AG04450 (cell line): ENCODE measurements at regions of chr1 and their contacts with region 1.

Region 1: GRCh38 chr1:39973503-39974135 is 18.7 kb downstream of the MFSD2A start:
- DNase-seq: no peak
- H3K4me3 ChIP-seq: no peak overlapping the region
- H3K27ac ChIP-seq: no peak overlapping the region
- H3K27me3 ChIP-seq: no peaks in the 10 kb centered on the region
- CTCF ChIP-seq: peak; percentile 98

Region 2: GRCh38 chr1:39816415-39817090 is 157.1 kb before region 1 on chr1:
- CTCF ChIA-PET with region 1: interaction called, 37 read pairs
- POLR2A ChIA-PET with region 1: no interaction called
- DNase-seq: peak; percentile 23
- H3K4me3 ChIP-seq: no peak overlapping the region
- H3K27ac ChIP-seq: no peak overlapping the region
- H3K27me3 ChIP-seq: peaks cover 12% of the 10 kb centered on the region
- CTCF ChIP-seq: peak; percentile 82

Region 3: GRCh38 chr1:39845275-39846116 is 128.1 kb before region 1 on chr1:
- CTCF ChIA-PET with region 1: interaction called, 14 read pairs
- POLR2A ChIA-PET with region 1: no interaction called
- DNase-seq: peak; percentile 75
- H3K4me3 ChIP-seq: peak overlapping the region; percentile 31
- H3K27ac ChIP-seq: peak overlapping the region; percentile 87
- H3K27me3 ChIP-seq: no peaks in the 10 kb centered on the region
- CTCF ChIP-seq: no peak

Region 4: DNA sequence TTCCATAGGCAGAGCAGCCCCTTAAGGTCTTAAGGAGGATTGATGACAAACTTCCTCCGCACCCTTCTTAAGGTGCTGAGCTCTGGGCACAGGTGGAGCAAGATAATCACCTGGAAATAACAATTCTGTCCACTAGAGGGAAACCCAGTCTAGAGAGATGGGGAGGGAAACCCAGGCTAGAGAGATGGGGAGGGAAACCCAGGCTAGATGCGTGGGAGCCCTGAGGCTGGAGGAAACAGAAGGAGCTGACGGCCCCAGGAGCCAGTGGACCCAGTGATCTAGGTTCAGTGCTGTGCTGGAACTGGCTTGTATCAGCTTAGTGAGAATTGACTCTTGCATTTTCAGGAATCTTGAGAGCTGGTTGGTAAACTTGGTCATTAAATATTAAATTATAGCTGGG is 54.1 kb before region 1 on chr1:
- CTCF ChIA-PET with region 1: interaction called, 102 read pairs
- POLR2A ChIA-PET with region 1: no interaction called
- DNase-seq: peak; percentile 21
- H3K4me3 ChIP-seq: no peak overlapping the region
- H3K27ac ChIP-seq: no peak overlapping the region
- H3K27me3 ChIP-seq: peaks cover 12% of the 10 kb centered on the region
- CTCF ChIP-seq: peak; percentile 71

Region 5: DNA sequence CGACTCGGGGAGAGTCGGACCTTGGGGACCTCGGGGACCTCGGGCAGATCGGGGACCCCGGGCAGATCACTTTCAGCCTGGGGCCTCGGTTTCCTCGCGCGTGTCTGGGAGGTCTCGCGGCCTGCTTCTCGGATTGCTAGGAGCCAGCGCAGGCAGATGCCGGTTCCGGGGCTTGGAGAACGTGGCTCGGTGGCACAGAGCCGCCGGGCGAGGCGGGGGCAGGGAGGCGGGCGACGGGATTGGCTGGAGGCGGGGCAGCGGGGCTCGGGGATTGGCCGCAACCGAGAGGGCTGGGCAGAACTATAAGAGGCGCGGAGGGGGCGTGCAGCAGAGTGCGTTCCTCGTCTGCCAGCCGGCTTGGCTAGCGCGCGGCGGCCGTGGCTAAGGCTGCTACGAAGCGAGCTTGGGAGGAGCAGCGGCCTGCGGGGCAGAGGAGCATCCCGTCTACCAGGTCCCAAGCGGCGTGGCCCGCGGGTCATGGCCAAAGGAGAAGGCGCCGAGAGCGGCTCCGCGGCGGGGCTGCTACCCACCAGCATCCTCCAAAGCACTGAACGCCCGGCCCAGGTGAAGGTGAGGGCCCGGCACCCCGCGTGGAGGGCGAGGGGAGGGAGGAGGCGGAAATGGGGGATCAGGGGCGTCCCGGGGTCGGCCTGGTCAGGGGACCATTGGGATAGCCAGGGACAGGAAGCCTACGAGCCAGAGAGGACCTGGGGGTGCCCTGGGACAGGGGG is 18.6 kb before region 1 on chr1 and contains the start of gene MFSD2A:
- CTCF ChIA-PET with region 1: interaction called, 12 read pairs
- POLR2A ChIA-PET with region 1: no interaction called
- DNase-seq: peak; percentile 75
- H3K4me3 ChIP-seq: peak within 1 kb of the TSS; percentile 70
- H3K27ac ChIP-seq: peak within 1 kb of the TSS; percentile 39
- H3K27me3 ChIP-seq: no peaks in the 10 kb centered on the region
- CTCF ChIP-seq: no peak
- polyA plus RNA-seq, gene MFSD2A: 1.6 and 2.6 TPM in 2 replicates

Region 6: GRCh38 chr1:39984961-39985360 is 11.3 kb after region 1 on chr1:
- CTCF ChIA-PET with region 1: interaction called, 18 read pairs
- POLR2A ChIA-PET with region 1: no interaction called
- DNase-seq: no peak
- H3K4me3 ChIP-seq: no peak overlapping the region
- H3K27ac ChIP-seq: no peak overlapping the region
- H3K27me3 ChIP-seq: no peaks in the 10 kb centered on the region
- CTCF ChIP-seq: no peak

Region 7: GRCh38 chr1:40032240-40032891 is 58.7 kb after region 1 on chr1:
- CTCF ChIA-PET with region 1: interaction called, 55 read pairs
- POLR2A ChIA-PET with region 1: no interaction called
- DNase-seq: no peak
- H3K4me3 ChIP-seq: no peak overlapping the region
- H3K27ac ChIP-seq: no peak overlapping the region
- H3K27me3 ChIP-seq: no peaks in the 10 kb centered on the region
- CTCF ChIP-seq: peak; percentile 70

Region 8: DNA sequence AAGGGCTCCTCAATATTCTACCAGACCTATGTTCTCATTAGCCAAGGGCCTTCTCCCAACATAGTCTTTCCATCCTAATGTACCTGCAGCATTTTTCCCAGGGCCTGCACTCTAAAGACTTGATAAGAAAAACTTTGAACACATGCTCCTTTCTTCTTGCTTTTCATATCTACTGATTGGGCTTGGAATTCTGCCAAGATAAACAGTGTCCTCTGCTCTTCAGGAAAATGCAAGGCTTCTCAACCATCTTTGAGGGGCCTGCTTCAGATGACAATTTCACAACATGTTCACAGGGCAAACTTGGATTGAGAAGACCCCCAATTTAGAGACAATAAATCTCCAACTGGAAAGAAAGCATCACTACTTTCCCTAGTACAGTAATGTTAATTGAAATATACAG is 149.2 kb after region 1 on chr1:
- CTCF ChIA-PET with region 1: no interaction called
- POLR2A ChIA-PET with region 1: no interaction called
- DNase-seq: no peak
- H3K4me3 ChIP-seq: no peak overlapping the region
- H3K27ac ChIP-seq: no peak overlapping the region
- H3K27me3 ChIP-seq: peaks cover 31% of the 10 kb centered on the region
- CTCF ChIP-seq: no peak

Region 9: DNA sequence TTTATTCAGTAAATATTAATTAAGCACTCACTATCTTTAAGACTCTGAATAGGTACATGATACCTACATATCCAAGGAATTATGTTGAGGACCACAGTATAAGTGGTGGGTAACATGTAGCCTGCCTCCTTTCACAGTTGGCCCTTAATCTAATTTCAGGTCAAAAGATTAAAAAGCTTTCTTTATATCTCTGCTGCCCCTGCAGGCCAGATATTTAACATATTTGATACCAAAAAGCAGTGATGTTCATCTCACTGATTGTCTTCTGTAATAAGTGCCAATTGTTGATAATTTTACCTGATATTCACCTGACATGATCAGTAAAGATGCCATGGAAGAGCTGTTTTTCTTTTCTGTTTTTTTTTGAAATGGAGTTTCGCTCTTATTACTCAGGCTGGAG is 224.0 kb after region 1 on chr1:
- CTCF ChIA-PET with region 1: no interaction called
- POLR2A ChIA-PET with region 1: no interaction called
- DNase-seq: no peak
- H3K4me3 ChIP-seq: no peak overlapping the region
- H3K27ac ChIP-seq: no peak overlapping the region
- H3K27me3 ChIP-seq: no peaks in the 10 kb centered on the region
- CTCF ChIP-seq: peak; percentile 20; the same call in 1 of the 2 replicates